A549 (cell line): ENCODE measurements at regions of chr17 and their contacts with region 1.

Region 1: GRCh38 chr17:37650419-37651003 is 7.3 kb upstream of the DDX52 start:
- DNase-seq: peak; percentile 67 to 76
- ATAC-seq: peak; percentile 78 to 91
- H3K4me3 ChIP-seq: no peak overlapping the region
- H3K27ac ChIP-seq: no peak overlapping the region
- H3K4me1 ChIP-seq: peaks cover 8% of the 10 kb centered on the region
- CTCF ChIP-seq: peak; percentile 90
- EP300 ChIP-seq: no peak
- POLR2A ChIP-seq: no peak
- RAD21 ChIP-seq: peak; percentile 92 to 95

Region 2: DNA sequence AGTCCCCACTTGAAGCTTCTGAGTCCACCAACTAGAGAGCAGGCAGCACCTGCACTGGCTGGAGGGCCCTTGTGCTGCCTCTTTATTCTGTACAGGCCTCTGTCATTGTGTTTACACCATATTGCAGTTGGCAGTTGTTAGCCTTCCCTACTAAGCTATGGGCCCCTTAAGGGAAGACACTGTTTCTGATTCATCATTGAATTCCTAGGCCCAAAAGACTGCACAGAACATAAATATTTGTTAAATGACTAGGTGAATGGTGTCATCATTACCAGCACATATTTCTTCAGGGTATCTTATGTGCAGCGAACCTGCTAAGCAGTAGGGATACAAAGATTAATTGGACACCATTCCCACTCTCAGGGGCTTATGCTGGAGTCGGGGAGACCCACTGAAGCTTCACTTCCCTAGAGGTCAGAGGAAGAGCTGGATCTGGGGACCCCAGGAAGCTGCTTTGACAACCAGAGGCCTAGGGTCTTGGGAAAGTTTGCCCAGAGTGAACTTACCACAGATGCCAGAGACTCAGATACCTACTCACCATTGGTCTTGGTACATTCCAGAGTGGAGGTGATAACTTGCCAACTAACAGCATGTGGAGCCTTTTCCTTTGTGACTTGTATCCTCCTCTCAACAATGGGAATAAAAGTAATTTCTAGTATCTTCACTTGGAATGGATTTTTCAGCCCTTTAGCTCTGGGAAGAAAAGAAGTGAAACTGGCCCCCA is 21.5 kb after region 1 on chr17:
- CTCF ChIA-PET with region 1: interaction called, 101 read pairs
- POLR2A ChIA-PET with region 1: no interaction called
- DNase-seq: peak; percentile 77 to 83
- ATAC-seq: peak; percentile 90 to 91
- H3K4me3 ChIP-seq: no peak overlapping the region
- H3K27ac ChIP-seq: peak overlapping the region; percentile 72 to 85
- H3K4me1 ChIP-seq: peaks cover 24% of the 10 kb centered on the region
- CTCF ChIP-seq: no peak
- EP300 ChIP-seq: 0 out of 5 replicates have a peak, but pooled peaks of 1 of the 2 experiments have one; percentile 40
- POLR2A ChIP-seq: no peak
- RAD21 ChIP-seq: no peak

Region 3: GRCh38 chr17:37710344-37710886 is 59.9 kb after region 1 on chr17:
- CTCF ChIA-PET with region 1: interaction called, 12 read pairs
- POLR2A ChIA-PET with region 1: no interaction called
- DNase-seq: peak; percentile 72 to 87
- ATAC-seq: peak in 1 of 2 experiments; percentile 33; a peak in 3 of 6 replicates
- H3K4me3 ChIP-seq: no peak overlapping the region
- H3K27ac ChIP-seq: peak overlapping the region; percentile 89 to 95; a peak in 4 of 6 replicates
- H3K4me1 ChIP-seq: peaks cover 88% of the 10 kb centered on the region
- CTCF ChIP-seq: no peak
- EP300 ChIP-seq: no peak
- POLR2A ChIP-seq: no peak
- RAD21 ChIP-seq: no peak

Region 4: GRCh38 chr17:37744961-37745800 is 94.7 kb after region 1 on chr17 and contains the start of gene HNF1B:
- CTCF ChIA-PET with region 1: interaction called, 66 read pairs
- POLR2A ChIA-PET with region 1: no interaction called
- DNase-seq: peak; percentile 68 to 76
- ATAC-seq: peak; percentile 40 to 50
- H3K4me3 ChIP-seq: peak within 1 kb of the TSS; percentile 67
- H3K27ac ChIP-seq: peak within 1 kb of the TSS; percentile 81 to 94
- H3K4me1 ChIP-seq: peaks cover 23% of the 10 kb centered on the region
- CTCF ChIP-seq: peak; percentile 48
- EP300 ChIP-seq: no peak
- POLR2A ChIP-seq: peak; percentile 60
- RAD21 ChIP-seq: peak; percentile 55 to 59; a peak in 4 of 5 replicates
- polyA plus RNA-seq, gene HNF1B: 13.3 and 17.0 TPM in 2 replicates

Region 5: DNA sequence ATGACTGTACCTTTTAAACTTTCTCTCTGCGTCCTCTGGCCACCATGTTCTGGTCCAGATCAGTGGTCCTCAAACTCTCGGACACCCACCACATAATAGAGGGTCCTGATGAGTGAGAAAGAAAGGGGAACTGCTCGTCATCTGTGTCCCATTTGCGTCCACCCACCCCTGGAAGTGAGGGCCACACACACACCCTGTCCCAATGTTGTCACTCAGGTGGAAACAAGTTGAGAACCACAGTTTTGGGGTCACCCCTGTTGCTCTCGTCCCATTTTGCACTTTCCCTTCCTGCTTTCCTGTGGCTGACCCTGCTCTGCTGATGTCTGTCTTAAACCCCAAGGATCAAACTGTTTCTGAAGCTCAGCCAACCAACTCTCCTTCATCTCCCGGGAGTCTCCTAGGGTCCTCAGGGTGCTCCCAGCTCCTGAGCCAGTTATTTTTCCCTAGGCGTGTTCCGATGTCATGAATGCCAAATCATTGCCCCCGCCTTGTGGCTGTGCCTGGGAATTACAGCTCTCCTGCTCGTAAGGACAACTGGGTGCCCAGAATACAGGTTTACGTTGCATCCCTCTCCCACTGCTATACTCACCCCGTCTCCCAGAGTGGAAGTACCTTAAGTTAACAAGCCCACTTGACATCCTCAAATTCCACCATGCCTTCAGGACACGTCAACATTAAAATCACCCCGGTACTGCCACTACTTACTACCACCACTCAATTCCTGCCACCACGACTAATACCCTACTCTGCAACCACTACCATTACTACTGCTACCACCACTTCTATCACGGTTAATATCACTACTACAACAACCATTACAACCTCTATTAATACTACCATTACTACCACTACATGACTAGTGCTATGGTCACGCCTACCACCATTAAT is 120.4 kb after region 1 on chr17:
- CTCF ChIA-PET with region 1: interaction called, 66 read pairs
- POLR2A ChIA-PET with region 1: no interaction called
- DNase-seq: peak; percentile 79 to 82
- ATAC-seq: peak; percentile 89 to 92
- H3K4me3 ChIP-seq: no peak overlapping the region
- H3K27ac ChIP-seq: peak overlapping the region; percentile 32 to 56; a peak in 5 of 6 replicates
- H3K4me1 ChIP-seq: peaks cover 4% of the 10 kb centered on the region; the same call in 2 of the 3 replicates
- CTCF ChIP-seq: peak; percentile 87
- EP300 ChIP-seq: no peak
- POLR2A ChIP-seq: no peak
- RAD21 ChIP-seq: peak; percentile 93 to 97

Region 6: DNA sequence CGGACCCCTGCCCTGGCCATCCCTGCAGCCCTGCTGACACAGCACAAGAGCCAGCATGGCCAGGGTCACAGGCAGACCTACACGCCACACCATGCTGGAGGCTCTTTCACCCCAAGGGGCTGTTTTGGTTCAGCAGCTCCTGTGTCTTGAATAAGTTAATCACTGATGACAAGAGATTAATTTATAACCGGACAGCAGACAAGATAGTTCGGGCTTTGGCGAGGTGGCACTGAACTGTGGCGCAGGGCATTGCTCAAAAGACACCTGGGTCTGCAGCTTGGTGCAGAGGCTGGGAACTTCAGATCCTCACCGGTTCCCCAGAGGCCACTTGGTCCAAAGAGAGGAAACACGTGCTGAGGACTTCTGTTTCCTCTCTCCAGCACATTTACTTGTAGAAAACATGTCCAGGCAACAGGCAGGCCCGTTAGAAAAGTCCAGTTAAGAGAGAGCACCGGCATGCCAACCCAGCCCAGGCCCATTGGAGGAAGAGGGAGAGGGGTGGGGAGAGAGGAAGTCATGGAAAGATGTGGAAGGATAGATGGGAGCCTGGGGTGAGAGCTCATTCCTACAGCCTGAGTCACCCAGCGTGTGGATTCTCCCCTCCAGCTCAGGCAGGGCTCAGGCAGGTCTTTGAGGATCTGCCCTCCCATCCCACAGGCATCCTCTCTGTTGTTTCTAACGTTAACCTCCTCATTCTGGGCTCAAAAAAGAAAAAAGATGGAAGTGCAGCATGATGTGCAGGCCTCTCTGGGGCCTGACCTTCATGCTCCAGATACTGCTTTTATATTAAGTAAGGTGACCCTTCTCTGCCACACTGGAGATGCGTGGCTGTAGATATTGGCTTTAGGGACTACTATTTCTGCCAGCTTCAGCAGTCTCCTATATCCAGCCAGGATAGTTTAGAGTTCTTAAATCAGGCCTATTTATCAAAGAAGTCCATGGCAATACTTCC is 174.3 kb after region 1 on chr17:
- CTCF ChIA-PET with region 1: interaction called, 14 read pairs
- POLR2A ChIA-PET with region 1: no interaction called
- DNase-seq: peak; percentile 79 to 95
- ATAC-seq: peak; percentile 90 to 93
- H3K4me3 ChIP-seq: no peak overlapping the region
- H3K27ac ChIP-seq: peak overlapping the region; percentile 73 to 87
- H3K4me1 ChIP-seq: peaks cover 54% of the 10 kb centered on the region
- CTCF ChIP-seq: no peak
- EP300 ChIP-seq: no peak; a peak in 1 of 5 replicates
- POLR2A ChIP-seq: no peak
- RAD21 ChIP-seq: 0 out of 5 replicates have a peak, but pooled peaks of 1 of the 2 experiments have one; percentile 3